ENCODE measurements at regions of chr20 and their contacts with region 1.

Region 1: DNA sequence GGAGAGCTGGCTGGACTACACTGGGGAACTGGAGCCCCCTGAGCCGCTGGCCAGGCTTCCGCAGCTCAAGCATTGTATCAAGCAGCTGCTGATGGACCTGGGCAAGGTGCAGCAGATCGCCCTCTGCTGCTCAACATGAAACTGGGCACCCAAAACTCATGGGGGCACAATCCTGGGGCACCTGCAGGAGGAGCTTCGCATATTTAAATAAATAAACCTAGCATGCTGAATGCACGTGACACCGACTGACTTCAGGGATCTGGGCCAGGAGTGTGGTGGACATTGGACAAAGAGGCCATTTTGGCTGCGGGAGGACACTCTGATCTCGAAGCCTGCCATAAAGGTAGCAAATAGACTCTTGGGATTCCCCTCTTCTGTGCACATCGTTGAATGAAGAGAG is 6.8 kb downstream of the SCAND1 start:
- DNase-seq: peak; percentile 56
- ATAC-seq: peak; percentile 67; the same call in 1 of the 2 replicates
- H3K4me3 ChIP-seq: no peak overlapping the region
- H3K27ac ChIP-seq: no peak overlapping the region
- H3K4me1 ChIP-seq: peaks cover 3% of the 10 kb centered on the region
- H3K27me3 ChIP-seq: no peaks in the 10 kb centered on the region
- CTCF ChIP-seq: peak; percentile 82

Region 2: DNA sequence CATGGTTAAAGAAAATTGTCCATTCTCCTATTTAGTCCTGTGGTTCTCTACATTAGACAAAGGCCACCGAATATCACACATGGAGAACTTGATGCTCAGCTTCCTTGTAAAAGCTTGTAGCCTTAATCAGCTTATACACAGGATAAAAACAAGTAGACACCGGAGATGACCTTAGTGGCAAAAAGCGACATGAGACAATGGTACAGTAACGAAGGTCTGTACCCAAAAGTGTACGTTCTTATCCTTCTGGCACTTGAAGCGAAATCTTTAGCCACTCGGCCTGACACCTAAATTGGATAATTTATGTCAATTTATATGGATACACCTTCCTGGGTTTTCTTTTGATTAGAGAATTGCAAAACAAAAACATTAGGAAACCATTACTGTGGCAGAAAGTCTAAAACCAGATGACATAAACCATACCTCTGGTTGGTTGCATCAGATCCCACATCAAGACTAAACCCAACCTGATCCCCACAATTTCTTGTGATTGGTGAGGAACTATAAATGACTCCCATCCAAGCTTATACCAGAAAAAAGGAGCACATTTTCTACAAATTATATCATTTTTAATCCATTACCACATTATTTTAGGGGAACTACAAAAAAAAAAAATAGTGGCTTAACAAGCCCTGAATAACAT is 211.5 kb before region 1 on chr20:
- CTCF ChIA-PET with region 1: no interaction called
- POLR2A ChIA-PET with region 1: no interaction called
- intact Hi-C with region 1: no loop called
- DNase-seq: no peak
- ATAC-seq: no peak
- H3K4me3 ChIP-seq: peak overlapping the region; percentile 15; the same call in 1 of the 2 replicates
- H3K27ac ChIP-seq: no peak overlapping the region
- H3K4me1 ChIP-seq: peaks cover 37% of the 10 kb centered on the region
- H3K27me3 ChIP-seq: no peaks in the 10 kb centered on the region
- CTCF ChIP-seq: no peak

Region 3: DNA sequence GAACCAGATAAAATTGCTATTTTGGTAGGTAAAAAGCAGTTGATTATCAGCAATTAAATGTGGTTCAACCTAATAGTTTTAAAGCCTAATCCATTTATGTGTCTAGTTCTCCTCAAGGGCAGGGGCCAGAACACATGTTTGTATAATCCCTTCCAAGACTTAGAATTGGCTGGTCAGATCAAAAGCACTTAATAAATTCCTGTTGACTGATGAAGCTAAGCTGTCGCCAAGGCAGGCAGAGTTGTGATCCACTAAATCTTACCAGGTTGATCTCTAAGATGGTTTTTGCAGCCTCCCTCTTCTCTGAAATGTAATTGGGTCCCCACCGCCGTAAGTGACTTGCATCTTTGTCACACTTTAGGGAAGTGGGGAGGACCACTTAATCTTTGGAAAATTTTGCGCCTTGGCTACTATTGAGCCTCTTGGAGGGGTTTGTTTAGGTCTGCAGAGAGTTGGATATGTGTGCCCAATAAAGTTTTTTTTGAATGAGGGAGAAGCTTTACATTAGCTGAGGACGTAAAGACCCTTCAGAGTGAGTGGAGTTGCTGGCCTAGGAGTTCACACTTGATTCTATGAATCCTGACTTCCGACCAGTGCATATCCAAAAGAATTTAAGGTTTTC is 109.8 kb before region 1 on chr20:
- CTCF ChIA-PET with region 1: no interaction called
- POLR2A ChIA-PET with region 1: no interaction called
- intact Hi-C with region 1: no loop called
- DNase-seq: no peak
- ATAC-seq: no peak
- H3K4me3 ChIP-seq: no peak overlapping the region
- H3K27ac ChIP-seq: no peak overlapping the region
- H3K4me1 ChIP-seq: no peaks in the 10 kb centered on the region
- H3K27me3 ChIP-seq: no peaks in the 10 kb centered on the region
- CTCF ChIP-seq: no peak

Region 4: GRCh38 chr20:35929286-35929685 is 18.2 kb before region 1 on chr20:
- CTCF ChIA-PET with region 1: interaction called, 10 read pairs
- POLR2A ChIA-PET with region 1: no interaction called
- intact Hi-C with region 1: no loop called
- DNase-seq: no peak
- ATAC-seq: no peak
- H3K4me3 ChIP-seq: no peak overlapping the region
- H3K27ac ChIP-seq: no peak overlapping the region
- H3K4me1 ChIP-seq: no peaks in the 10 kb centered on the region
- H3K27me3 ChIP-seq: no peaks in the 10 kb centered on the region
- CTCF ChIP-seq: no peak